ENCODE measurements at regions of chr10 and their contacts with region 1.

Region 1: DNA sequence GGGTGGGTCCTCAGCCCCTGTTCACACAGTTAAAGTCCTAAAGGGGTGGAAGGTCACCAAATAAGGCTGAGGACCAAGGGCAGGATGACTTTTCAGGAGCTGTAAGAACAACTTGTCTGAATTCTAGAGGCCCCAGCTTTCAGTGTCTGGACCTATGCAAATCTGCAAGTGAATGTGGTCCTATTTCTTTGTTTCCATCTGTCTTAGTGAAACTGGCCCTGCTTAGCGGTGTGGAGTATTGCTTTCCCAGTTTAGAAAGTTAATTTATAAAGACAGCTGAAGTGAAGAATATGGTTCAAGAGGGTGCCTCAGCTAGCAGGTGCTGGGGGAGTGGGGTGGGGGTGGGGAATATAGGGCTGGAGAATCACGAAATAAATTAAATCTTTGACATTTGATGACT is 40.1 kb downstream of the HHEX start:
- DNase-seq: no peak
- H3K4me3 ChIP-seq: no peak overlapping the region
- H3K27ac ChIP-seq: no peak overlapping the region
- H3K4me1 ChIP-seq: no peaks in the 10 kb centered on the region
- H3K27me3 ChIP-seq: no peaks in the 10 kb centered on the region
- CTCF ChIP-seq: no peak

Region 2: DNA sequence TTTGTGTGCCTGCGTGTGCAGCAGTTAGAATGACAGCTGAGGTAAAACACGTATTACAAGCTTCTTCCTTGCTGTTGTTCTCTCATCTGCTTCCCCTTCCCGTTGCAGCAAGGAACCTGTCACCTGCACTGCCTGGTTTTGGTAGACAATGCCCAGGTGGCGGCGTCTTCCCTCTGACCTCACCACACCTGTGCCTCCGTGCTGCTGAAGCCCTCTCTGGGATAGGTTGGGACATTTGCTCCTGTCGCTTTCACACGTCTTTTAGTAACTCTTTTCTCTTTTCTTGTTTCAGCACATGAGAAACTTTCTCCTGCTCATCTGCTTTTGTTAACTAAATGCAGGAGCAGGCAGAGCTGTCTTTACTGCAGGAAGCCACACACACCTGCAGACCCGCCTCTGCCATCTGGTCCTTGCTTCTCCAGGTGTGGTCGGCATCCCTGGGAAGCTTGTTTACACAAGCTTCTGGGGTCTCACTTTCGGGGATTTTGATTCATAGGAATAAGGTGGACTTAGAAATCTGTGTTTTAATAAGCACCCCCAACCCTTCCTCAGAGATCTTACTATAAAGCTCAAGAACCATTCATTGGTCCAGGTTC is 57.8 kb after region 1 on chr10:
- intact Hi-C with region 1: loop called (anchors 10 kb)
- DNase-seq: no peak
- H3K4me3 ChIP-seq: no peak overlapping the region
- H3K27ac ChIP-seq: no peak overlapping the region
- H3K4me1 ChIP-seq: no peaks in the 10 kb centered on the region
- H3K27me3 ChIP-seq: no peaks in the 10 kb centered on the region
- CTCF ChIP-seq: no peak

Measured in tibial artery (tissue), 4 donors.